ENCODE measurements at regions of chr11 and their contacts with region 1.

Region 1: GRCh38 chr11:117843666-117844484 is 19.3 kb upstream of the FXYD2 start:
- DNase-seq: no peak
- H3K4me3 ChIP-seq: no peak overlapping the region
- H3K27ac ChIP-seq: no peak overlapping the region
- H3K4me1 ChIP-seq: peaks cover 0 to 6% (median 0%) of the 10 kb centered on the region in 3 donors
- H3K27me3 ChIP-seq: peaks cover 0 to 14% (median 0%) of the 10 kb centered on the region in 4 donors
- CTCF ChIP-seq: peak; percentile 96 to 100 (median 98)
- POLR2A ChIP-seq: no peak

Region 2: DNA sequence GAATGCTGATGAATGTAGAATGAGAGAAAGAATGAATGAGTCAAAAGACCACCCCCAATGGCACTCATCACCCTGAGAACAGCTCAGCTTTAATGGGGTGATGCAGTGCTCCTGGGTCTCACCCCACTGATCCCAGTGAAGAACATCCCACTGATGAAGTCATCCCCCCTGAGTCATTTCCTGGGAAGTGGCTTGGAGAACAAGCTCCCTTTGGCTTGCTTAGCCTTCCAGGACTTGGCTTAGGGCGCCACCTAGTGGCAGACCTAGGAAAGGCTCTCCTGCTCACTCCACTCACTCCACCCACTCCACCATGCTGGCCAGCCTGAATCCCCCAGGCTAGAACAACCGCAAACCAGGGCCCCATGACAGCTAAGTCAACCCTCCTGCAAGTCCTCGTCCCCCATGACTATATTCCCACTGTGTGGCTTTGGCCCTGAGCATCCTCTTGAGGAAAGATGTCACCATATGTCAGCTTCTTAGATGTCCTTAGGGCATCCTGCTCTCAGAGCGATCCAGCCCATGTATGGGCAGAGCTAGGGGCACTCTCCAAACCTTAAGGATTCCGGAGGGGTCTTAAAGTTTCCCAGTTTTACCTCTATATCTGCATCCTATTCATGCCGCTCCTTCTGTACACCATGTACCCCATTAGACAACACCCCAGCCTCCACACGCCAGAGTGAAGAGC is 103.1 kb after region 1 on chr11:
- intact Hi-C with region 1: loop called (anchors 2 kb)
- DNase-seq: no peak
- H3K4me3 ChIP-seq: no peak overlapping the region
- H3K27ac ChIP-seq: no peak overlapping the region
- H3K4me1 ChIP-seq: peaks cover 0 to 22% (median 0%) of the 10 kb centered on the region in 3 donors
- H3K27me3 ChIP-seq: peaks cover 0 to 20% (median 0%) of the 10 kb centered on the region in 4 donors
- CTCF ChIP-seq: peak; percentile 95 to 99 (median 98)
- POLR2A ChIP-seq: no peak

Region 3: DNA sequence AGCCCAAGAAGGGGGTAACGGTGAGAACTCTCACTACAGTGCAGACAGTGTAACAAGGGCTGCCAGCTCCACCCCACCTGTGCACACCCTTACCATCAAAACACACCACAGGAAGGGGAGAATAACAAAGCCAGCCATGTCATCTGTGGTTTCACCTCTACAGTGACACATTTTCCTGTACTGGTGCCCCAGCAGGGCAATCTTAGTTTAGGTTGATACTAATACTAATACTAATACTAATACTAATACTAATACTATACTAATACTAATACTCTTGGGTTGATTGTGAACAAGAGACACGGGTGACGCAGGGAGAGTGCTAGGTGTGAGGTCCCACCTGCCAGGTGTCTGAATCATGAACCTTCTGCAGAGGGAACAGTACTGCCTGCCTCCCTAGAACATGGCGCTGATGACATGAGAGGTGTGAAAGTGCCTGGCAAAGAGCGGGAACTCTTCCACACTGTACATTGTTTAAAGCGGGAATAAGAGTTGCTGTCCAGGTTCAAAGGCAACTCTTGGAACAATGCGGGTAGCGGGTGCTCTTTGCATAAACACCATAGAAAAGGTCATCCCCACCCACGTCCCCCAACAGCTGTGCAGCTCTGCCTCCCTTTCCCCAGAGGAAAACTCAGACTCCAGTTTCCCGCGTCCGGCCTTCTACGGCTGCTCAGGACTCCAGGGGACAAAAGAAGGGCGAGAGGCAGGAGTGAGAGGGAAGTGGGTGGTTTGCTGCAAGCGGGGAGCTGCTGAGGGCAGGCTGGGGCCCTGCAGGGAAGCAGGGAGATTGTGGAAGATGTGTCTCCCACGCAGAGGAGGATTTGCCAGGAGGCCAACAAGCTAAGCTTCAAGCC is 208.0 kb after region 1 on chr11:
- intact Hi-C with region 1: loop called (anchors 5 kb)
- DNase-seq: no peak
- H3K4me3 ChIP-seq: no peak overlapping the region
- H3K27ac ChIP-seq: peak overlapping the region in 1 of 4 donors; percentile 17
- H3K4me1 ChIP-seq: peaks cover 0 to 20% (median 0%) of the 10 kb centered on the region in 3 donors
- H3K27me3 ChIP-seq: peaks cover 0 to 31% (median 0%) of the 10 kb centered on the region in 4 donors
- CTCF ChIP-seq: no peak
- POLR2A ChIP-seq: no peak

Measured in esophagus squamous epithelium (tissue), 5 donors.